AG04450 (cell line): ENCODE measurements at regions of chr18 and their contacts with region 1.

Region 1: GRCh38 chr18:34661464-34662111 is 48.5 kb upstream of the DTNA start:
- DNase-seq: peak; percentile 7
- H3K4me3 ChIP-seq: no peak overlapping the region
- H3K27ac ChIP-seq: no peak overlapping the region
- H3K27me3 ChIP-seq: no peaks in the 10 kb centered on the region
- CTCF ChIP-seq: peak; percentile 90

Region 2: GRCh38 chr18:34592961-34593382 is 68.6 kb before region 1 on chr18:
- CTCF ChIA-PET with region 1: interaction called, 16 read pairs
- POLR2A ChIA-PET with region 1: no interaction called
- DNase-seq: peak; percentile 16
- H3K4me3 ChIP-seq: peak overlapping the region; percentile 53
- H3K27ac ChIP-seq: no peak overlapping the region
- H3K27me3 ChIP-seq: no peaks in the 10 kb centered on the region
- CTCF ChIP-seq: no peak

Region 3: DNA sequence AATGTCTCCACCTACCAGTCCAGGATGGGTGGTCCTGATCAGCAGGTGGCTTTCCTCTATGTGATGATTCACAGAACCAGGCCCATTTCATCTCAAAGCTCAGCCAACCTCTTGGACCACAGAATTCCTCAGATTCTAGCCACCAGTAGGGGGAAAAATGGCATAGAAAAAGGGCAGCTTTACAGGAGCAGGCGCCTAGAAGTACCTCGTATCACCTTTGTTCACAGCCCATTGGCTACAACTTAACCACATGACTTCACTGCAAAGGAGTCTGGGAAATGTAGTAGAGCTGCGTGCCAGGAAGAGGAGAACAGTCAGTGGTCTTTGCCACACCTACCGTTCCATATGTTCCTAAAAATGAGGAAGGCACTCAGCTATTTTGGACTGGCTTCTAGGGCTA is 14.3 kb before region 1 on chr18:
- CTCF ChIA-PET with region 1: interaction called, 122 read pairs
- POLR2A ChIA-PET with region 1: interaction called, 3 read pairs
- DNase-seq: no peak
- H3K4me3 ChIP-seq: no peak overlapping the region
- H3K27ac ChIP-seq: no peak overlapping the region
- H3K27me3 ChIP-seq: no peaks in the 10 kb centered on the region
- CTCF ChIP-seq: no peak

Region 4: DNA sequence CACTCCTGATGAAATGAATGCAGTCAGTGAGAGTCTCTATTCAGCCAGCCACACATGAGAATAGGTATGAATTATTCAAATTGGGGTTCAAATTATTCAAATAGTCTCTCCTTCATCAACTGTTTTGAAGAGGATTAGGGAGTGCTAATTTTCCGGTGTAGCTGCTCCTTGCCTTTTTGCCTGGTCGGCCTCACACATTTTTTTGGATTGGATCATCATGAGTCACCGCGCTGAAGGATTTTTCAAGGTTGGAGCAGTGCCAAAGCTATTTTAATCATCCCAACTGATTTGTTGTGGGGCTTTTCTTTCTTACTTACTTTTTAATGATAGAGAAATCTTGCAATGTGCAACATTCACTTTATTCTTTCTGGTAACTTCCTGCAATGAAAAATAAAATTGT is 46.1 kb after region 1 on chr18:
- CTCF ChIA-PET with region 1: interaction called, 54 read pairs
- POLR2A ChIA-PET with region 1: interaction called, 3 read pairs
- DNase-seq: peak; percentile 82
- H3K4me3 ChIP-seq: no peak overlapping the region
- H3K27ac ChIP-seq: no peak overlapping the region
- H3K27me3 ChIP-seq: no peaks in the 10 kb centered on the region
- CTCF ChIP-seq: no peak

Region 5: DNA sequence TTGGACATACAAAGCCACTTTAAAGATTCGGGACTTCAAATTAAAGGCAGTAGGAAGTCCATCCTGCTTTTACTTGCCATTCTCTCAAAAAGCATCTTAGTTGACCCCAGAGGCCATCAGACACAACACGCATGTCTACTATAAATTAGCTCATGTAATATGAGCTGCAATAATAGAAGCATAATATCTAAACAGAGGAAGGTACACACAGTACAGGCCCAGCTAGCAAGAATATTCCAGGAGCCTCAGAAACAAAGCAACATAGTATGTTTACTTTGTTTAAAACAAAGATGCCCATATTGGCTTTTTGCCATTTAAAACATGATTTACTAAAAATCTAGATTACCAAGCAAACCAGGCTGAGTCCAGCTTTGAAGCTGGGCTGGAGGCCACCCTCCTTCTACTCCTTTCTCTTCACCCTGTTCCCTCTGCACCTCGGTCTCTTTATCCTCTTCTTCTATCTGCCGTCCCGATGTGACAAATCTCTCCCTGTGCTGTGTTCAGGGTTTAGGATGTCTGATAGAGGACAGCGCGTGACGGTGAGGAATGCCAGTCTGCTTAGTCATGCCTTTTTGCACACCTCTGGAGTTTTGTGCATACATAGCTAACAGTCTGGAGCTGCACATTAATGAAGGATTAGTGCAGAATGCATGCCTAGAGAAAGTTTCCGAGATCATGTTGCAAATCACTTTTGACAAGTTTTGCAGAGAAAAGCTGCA is 76.7 kb after region 1 on chr18:
- CTCF ChIA-PET with region 1: interaction called, 10 read pairs
- POLR2A ChIA-PET with region 1: no interaction called
- DNase-seq: no peak
- H3K4me3 ChIP-seq: no peak overlapping the region
- H3K27ac ChIP-seq: no peak overlapping the region
- H3K27me3 ChIP-seq: no peaks in the 10 kb centered on the region
- CTCF ChIP-seq: no peak

Region 6: GRCh38 chr18:34773961-34774766 is 112.6 kb after region 1 on chr18:
- CTCF ChIA-PET with region 1: interaction called, 28 read pairs
- POLR2A ChIA-PET with region 1: no interaction called
- DNase-seq: no peak
- H3K4me3 ChIP-seq: no peak overlapping the region
- H3K27ac ChIP-seq: no peak overlapping the region
- H3K27me3 ChIP-seq: no peaks in the 10 kb centered on the region
- CTCF ChIP-seq: no peak

Region 7: GRCh38 chr18:34801774-34802173 is 140.2 kb after region 1 on chr18:
- CTCF ChIA-PET with region 1: interaction called, 14 read pairs
- POLR2A ChIA-PET with region 1: no interaction called
- DNase-seq: no peak
- H3K4me3 ChIP-seq: no peak overlapping the region
- H3K27ac ChIP-seq: no peak overlapping the region
- H3K27me3 ChIP-seq: no peaks in the 10 kb centered on the region
- CTCF ChIP-seq: no peak